HEK293T (cell line): ENCODE measurements at regions of chr1 and their contacts with region 1.

Region 1: GRCh38 chr1:88888750-88889149 is 2.6 kb downstream of the GTF2B start:
- DNase-seq: no peak

Region 2: DNA sequence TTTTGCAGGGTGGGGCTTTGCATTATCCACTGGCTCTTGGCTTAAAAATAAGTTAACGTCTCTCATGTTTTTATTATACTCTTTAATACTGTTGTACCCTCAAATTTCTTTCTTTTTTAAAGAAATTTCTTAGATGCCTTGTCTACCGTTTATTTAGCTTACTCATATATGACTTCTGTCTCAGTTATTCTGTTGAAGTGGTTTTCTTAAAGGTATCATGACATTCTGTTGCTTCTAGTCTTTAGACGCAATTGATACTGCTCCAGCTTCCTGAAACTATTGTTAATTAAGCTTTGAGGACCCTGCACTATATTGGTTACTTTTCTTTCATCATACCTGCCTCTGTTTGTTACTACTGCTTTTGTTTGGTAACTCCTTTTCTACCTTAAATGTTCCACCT is 193.0 kb before region 1 on chr1:
- CTCF ChIA-PET with region 1: no interaction called
- POLR2A ChIA-PET with region 1: no interaction called
- DNase-seq: no peak

Region 3: GRCh38 chr1:88825721-88826120 is 63.0 kb before region 1 on chr1:
- CTCF ChIA-PET with region 1: no interaction called
- POLR2A ChIA-PET with region 1: no interaction called
- DNase-seq: no peak

Region 4: DNA sequence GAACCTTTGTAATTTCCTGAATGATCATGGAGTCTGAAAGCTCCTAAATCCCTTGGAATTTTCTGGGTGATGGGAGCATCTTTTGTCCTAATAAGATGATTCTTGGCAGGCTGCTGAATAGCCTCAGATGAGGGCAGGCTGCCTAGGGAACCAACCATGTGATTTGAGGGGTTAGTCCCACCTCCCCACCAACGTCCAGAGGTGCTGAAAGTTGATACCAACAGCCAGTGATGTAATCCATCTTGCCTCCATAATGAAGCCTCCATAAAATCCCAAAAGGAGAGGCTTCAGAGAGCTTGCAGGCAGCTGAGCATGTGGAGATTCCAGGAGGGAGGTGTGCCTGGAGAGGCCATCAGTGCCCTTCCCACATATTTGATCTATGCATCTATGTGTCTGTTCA is 41.1 kb before region 1 on chr1:
- CTCF ChIA-PET with region 1: no interaction called
- POLR2A ChIA-PET with region 1: no interaction called
- DNase-seq: peak; percentile 9

Region 5: DNA sequence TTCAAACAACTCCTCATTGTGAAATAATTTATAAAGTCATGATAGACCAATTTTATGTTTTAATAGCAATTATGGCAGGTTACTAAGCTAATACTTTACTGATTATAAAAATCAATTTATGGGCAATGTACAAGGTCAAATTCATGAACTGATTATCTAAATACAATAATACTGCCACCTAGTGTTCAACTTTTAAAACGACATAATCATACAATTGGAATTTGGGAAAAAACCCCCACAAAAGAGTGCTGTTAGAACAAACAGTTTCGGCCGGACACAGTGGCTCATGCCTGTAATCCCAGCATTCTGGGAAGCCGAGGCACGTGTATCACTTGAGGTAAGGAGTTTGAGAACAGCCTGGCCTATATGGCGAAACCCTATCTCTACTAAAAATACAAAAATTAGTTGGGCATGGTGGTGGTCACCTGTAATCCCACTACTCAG is 11.3 kb before region 1 on chr1:
- CTCF ChIA-PET with region 1: interaction called, 11 read pairs
- POLR2A ChIA-PET with region 1: interaction called, 4 read pairs
- DNase-seq: peak; percentile 26

Region 6: GRCh38 chr1:88900883-88901282 is 12.1 kb after region 1 on chr1:
- CTCF ChIA-PET with region 1: no interaction called
- POLR2A ChIA-PET with region 1: no interaction called
- DNase-seq: no peak